Activated CD4-positive, alpha-beta memory T cell treated with anti-CD3 and anti-CD28 coated beads for 36 hours (primary cell): ENCODE measurements at regions of chr6 and their contacts with region 1.

Region 1: DNA sequence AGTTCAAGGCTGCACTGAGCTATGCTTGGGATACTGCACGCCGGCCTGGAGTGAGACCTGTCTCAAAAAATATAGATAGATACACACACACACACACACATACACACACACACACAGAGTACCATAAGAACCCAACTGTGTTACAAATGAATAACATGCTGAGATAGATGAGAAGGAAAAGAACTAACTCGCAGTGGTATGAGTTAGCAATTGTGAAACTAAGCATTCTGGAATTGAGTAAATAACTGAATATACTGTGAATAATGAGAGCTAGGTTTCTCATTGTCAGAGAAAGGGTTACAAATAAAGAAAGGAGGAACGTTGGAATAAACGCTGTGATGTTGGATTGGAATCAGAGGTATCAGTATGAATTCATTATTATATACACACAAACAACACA is 14.6 kb upstream of the FAXC start:
- DNase-seq: peak; percentile 11
- H3K4me3 Mint-ChIP-seq: no peak overlapping the region
- H3K27ac Mint-ChIP-seq: no peak overlapping the region
- H3K4me1 Mint-ChIP-seq: peaks cover 16% of the 10 kb centered on the region
- H3K27me3 Mint-ChIP-seq: peaks cover 21% of the 10 kb centered on the region

Region 2: DNA sequence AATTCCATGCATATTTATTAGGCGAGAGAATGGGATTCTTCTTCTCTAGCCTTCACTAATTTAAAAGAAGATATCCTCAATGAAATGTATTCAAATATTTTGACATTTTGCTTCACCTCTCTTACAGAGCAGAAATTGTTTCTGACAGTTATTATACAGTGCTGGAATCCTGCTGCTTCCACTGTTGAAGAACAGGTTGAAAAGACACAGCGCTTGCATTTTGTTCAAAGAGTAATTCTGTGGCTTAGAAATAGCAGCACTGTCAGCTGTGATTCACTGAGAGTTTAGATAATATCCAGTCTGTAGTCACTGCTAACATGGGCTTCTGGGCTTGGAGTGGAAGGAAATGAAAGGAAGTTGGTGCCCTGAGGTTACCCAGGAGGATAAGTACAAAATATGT is 299.2 kb before region 1 on chr6:
- CTCF ChIA-PET with region 1: no interaction called
- POLR2A ChIA-PET with region 1: no interaction called
- intact Hi-C with region 1: no loop called
- DNase-seq: no peak
- H3K4me3 Mint-ChIP-seq: no peak overlapping the region
- H3K27ac Mint-ChIP-seq: no peak overlapping the region
- H3K4me1 Mint-ChIP-seq: no peaks in the 10 kb centered on the region
- H3K27me3 Mint-ChIP-seq: peaks cover 5% of the 10 kb centered on the region

Region 3: DNA sequence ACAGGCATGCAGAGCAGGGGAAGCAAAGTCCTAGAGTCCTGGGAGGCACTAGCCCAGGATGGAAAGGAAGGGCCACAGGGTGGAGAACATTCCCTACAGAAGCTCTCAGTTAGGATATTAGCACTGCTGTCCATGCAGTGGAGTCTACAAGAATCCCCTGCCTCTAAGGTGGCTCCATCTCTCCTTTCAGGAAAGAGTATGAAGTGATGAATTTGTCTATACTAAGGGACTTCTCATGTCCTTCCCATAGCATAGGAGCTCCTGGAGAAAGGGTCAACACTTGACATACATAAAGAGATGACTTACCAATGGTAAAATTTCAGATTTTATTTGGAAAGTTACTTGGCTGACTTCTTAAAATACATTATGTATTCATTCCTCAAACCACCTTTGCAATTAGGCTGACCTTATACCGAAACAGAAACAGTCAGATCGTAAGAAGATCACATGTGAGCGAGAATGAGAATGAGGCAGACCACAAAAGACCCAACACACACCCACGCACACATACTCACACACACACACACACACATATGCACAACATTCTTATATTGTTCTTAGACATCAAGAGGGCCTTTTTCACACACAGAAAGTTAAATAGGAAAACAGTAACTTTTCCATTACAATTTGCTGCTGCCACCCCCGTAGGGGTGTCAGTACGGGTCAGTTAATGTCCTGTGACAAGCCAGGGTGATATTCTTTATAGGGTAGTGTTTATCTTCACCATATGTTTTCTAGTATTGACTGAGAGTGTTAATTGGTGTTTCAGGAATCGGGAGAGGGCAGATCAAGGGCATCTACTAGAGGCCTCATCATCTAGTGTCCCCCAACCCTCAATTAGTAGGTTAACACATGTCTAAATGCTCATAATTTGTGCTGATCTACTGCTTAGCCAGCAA is 174.0 kb before region 1 on chr6:
- CTCF ChIA-PET with region 1: no interaction called
- POLR2A ChIA-PET with region 1: no interaction called
- intact Hi-C with region 1: loop called (anchors 1 kb)
- DNase-seq: peak; percentile 54
- H3K4me3 Mint-ChIP-seq: no peak overlapping the region
- H3K27ac Mint-ChIP-seq: no peak overlapping the region
- H3K4me1 Mint-ChIP-seq: peaks cover 6% of the 10 kb centered on the region
- H3K27me3 Mint-ChIP-seq: peaks cover 21% of the 10 kb centered on the region

Region 4: GRCh38 chr6:99349171-99350141 is 14.6 kb before region 1 on chr6 and contains the start of gene FAXC:
- CTCF ChIA-PET with region 1: no interaction called
- POLR2A ChIA-PET with region 1: no interaction called
- intact Hi-C with region 1: loop called (anchors 2 kb)
- DNase-seq: peak; percentile 15
- H3K4me3 Mint-ChIP-seq: peak within 1 kb of the TSS; percentile 45
- H3K27ac Mint-ChIP-seq: no peak within 1 kb of the TSS
- H3K4me1 Mint-ChIP-seq: no peaks in the 10 kb centered on the region
- H3K27me3 Mint-ChIP-seq: peaks cover 61% of the 10 kb centered on the region
- total RNA-seq, gene FAXC: not detected